ENCODE measurements at regions of chr1 and their contacts with region 1.

Region 1: GRCh38 chr1:27725374-27726173 is at the start of gene FAM76A:
- DNase-seq: peak; percentile 100
- H3K4me3 ChIP-seq: peak within 1 kb of the TSS; percentile 96 to 100 (median 98)
- H3K27ac ChIP-seq: peak within 1 kb of the TSS; percentile 95 to 99 (median 97)
- H3K4me1 ChIP-seq: peaks cover 13 to 42% (median 27%) of the 10 kb centered on the region in 4 donors
- H3K27me3 ChIP-seq: no peaks in the 10 kb centered on the region
- CTCF ChIP-seq: peak; percentile 36 to 50 (median 46)
- EP300 ChIP-seq: no peak
- POLR2A ChIP-seq: no peak
- total RNA-seq, gene FAM76A: 15.6 to 17.4 (median 16.6) TPM

Region 2: DNA sequence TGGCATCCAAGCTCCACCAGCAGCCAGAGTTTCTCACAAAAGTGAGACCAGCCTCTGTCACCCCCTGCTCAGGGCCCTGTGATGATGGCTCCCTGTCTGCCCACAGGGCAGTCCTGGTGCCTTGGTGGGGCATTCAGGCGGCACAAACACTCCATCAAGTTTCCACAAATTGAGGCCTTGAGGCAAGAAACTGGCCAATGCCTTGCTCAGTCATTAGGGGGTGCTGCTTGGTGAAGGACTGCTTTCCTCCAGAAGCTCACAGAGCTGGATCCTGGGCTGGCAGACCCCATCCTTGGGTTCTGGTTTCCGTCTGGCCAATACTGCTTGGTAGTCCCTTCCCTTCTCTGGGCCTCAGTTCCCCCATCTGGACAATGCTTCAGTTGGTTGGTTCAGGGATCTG is 109.1 kb before region 1 on chr1:
- intact Hi-C with region 1: no loop called
- DNase-seq: no peak
- H3K4me3 ChIP-seq: no peak overlapping the region
- H3K27ac ChIP-seq: no peak overlapping the region
- H3K4me1 ChIP-seq: peaks cover 5 to 13% (median 8%) of the 10 kb centered on the region in 4 donors
- H3K27me3 ChIP-seq: peaks cover 0 to 20% (median 0%) of the 10 kb centered on the region in 4 donors
- CTCF ChIP-seq: no peak
- EP300 ChIP-seq: no peak
- POLR2A ChIP-seq: no peak

Region 3: GRCh38 chr1:27671964-27672749 is 53.4 kb before region 1 on chr1 and contains the start of gene IFI6:
- intact Hi-C with region 1: loop called (anchors 5 kb)
- DNase-seq: peak; percentile 95
- H3K4me3 ChIP-seq: peak within 1 kb of the TSS; percentile 57 to 65 (median 60)
- H3K27ac ChIP-seq: peak within 1 kb of the TSS; percentile 85 to 91 (median 88)
- H3K4me1 ChIP-seq: peaks cover 25 to 48% (median 39%) of the 10 kb centered on the region in 4 donors
- H3K27me3 ChIP-seq: no peaks in the 10 kb centered on the region
- CTCF ChIP-seq: peak; percentile 30 to 59 (median 50)
- EP300 ChIP-seq: no peak
- POLR2A ChIP-seq: no peak
- total RNA-seq, gene IFI6: 33.2 to 86.3 (median 70.2) TPM

Region 4: GRCh38 chr1:27772933-27773825 is 47.6 kb after region 1 on chr1 and contains the start of gene STX12:
- intact Hi-C with region 1: loop called (anchors 5 kb)
- DNase-seq: peak; percentile 100
- H3K4me3 ChIP-seq: peak within 1 kb of the TSS; percentile 77 to 86 (median 81)
- H3K27ac ChIP-seq: peak within 1 kb of the TSS; percentile 89 to 96 (median 96)
- H3K4me1 ChIP-seq: peaks cover 14 to 46% (median 38%) of the 10 kb centered on the region in 4 donors
- H3K27me3 ChIP-seq: no peaks in the 10 kb centered on the region
- CTCF ChIP-seq: peak in 1 of 3 experiments; percentile 9
- EP300 ChIP-seq: no peak
- POLR2A ChIP-seq: peak; percentile 85
- total RNA-seq, gene STX12: 44.0 to 76.7 (median 56.1) TPM

Region 5: GRCh38 chr1:27830621-27831424 is 105.2 kb after region 1 on chr1 and contains the start of gene PPP1R8:
- intact Hi-C with region 1: loop called (anchors 10 kb)
- DNase-seq: peak; percentile 96
- H3K4me3 ChIP-seq: peak within 1 kb of the TSS; percentile 85 to 95 (median 90)
- H3K27ac ChIP-seq: peak within 1 kb of the TSS; percentile 85 to 92 (median 92)
- H3K4me1 ChIP-seq: peaks cover 15 to 38% (median 25%) of the 10 kb centered on the region in 4 donors
- H3K27me3 ChIP-seq: no peaks in the 10 kb centered on the region
- CTCF ChIP-seq: no peak
- EP300 ChIP-seq: no peak
- POLR2A ChIP-seq: peak; percentile 62
- total RNA-seq, gene PPP1R8: 33.2 to 51.6 (median 42.0) TPM

Measured in esophagus muscularis mucosa (tissue), 4 donors.